ENCODE measurements at regions of chr19 and their contacts with region 1.

Region 1: DNA sequence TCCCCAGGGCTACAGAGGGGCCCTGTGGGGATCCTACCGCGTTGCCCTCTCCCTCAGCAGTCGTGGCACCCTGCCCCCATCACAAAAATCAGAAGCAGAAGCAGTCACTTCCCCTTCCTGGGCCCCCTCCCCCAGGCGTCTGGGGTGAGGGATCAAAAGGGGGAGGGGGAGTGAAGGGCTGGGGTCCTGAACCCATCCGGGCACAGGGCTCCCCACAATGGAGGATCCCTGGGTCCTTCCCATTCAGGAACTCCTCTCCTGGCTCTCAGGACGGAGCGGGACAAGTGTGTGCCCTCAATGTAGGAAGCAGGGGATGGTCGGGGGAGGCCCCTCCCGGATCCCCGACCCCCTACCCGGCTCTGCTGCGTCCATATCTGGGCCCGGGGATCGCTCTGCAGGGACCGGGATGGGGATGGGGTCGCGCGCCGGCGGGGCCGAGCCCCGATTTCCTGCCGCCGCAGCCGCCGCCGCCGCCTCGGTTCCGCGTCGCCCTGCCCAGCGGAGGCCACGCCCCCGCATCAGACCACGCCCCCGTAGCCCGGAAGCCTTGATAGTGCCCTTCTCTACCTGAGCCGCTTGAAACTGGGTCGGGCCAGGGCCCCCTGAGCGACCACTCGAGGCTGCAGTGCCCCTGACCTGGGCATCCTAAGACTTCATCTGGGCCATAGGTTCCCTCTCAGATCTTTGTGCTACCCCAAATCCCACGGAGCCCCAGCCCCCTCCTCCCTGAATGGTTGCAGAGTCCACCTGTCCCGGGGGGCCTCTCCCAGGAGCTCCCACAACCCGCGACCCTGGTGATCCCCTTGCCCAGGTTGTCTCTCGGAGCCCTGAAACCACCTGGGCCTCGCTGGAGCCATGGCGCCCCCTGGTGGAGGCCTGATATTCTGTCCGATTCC is at the start of gene GMIP:
- DNase-seq: peak; percentile 89
- ATAC-seq: peak; percentile 89
- H3K4me3 Mint-ChIP-seq: peak within 1 kb of the TSS; percentile 99
- H3K27ac Mint-ChIP-seq: peak within 1 kb of the TSS; percentile 96
- H3K4me1 Mint-ChIP-seq: peaks cover 19% of the 10 kb centered on the region
- H3K27me3 Mint-ChIP-seq: no peaks in the 10 kb centered on the region
- CTCF ChIP-seq: no peak
- total RNA-seq, gene GMIP: 129 and 130 TPM in 2 replicates

Region 2: DNA sequence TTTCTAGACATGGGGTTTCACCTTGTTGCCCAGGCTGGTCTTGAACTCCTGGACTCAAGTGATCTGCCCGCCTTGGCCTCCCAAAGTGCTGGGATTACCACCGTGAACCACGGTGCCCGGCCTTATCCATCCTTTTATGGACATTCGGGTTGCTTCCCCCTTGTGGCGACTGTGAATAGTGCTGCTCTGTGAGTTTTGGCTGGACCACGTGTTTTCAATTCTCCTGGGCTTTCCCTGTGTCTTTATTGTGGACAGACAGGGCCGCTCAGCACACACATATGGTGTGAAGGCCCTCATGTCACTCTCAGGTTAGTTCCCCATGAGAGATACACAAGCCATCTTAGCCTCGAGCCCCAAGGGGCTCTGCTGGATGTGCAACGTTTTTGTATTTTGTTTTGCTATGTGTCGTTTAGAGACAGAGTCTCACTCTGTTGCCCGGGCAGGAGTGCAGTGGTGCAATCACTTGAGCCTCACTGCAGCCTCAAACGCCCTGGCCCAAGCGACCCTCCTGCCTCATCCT is 282.3 kb before region 1 on chr19:
- CTCF ChIA-PET with region 1: no interaction called
- POLR2A ChIA-PET with region 1: interaction called, 3 read pairs
- intact Hi-C with region 1: loop called (anchors 5 kb)
- DNase-seq: peak; percentile 54
- ATAC-seq: peak; percentile 68
- H3K4me3 Mint-ChIP-seq: peak overlapping the region; percentile 74
- H3K27ac Mint-ChIP-seq: peak overlapping the region; percentile 57
- H3K4me1 Mint-ChIP-seq: peaks cover 23% of the 10 kb centered on the region
- H3K27me3 Mint-ChIP-seq: no peaks in the 10 kb centered on the region
- CTCF ChIP-seq: peak; percentile 87

Region 3: GRCh38 chr19:19420570-19421298 is 222.7 kb before region 1 on chr19:
- CTCF ChIA-PET with region 1: no interaction called
- POLR2A ChIA-PET with region 1: no interaction called
- intact Hi-C with region 1: no loop called
- DNase-seq: no peak
- ATAC-seq: peak; percentile 51
- H3K4me3 Mint-ChIP-seq: peak overlapping the region; percentile 41
- H3K27ac Mint-ChIP-seq: peak overlapping the region; percentile 46
- H3K4me1 Mint-ChIP-seq: peaks cover 79% of the 10 kb centered on the region
- H3K27me3 Mint-ChIP-seq: no peaks in the 10 kb centered on the region
- CTCF ChIP-seq: no peak

Region 4: GRCh38 chr19:19531951-19532805 is 111.2 kb before region 1 on chr19:
- CTCF ChIA-PET with region 1: interaction called, 46 read pairs
- POLR2A ChIA-PET with region 1: interaction called, 42 read pairs
- intact Hi-C with region 1: loop called (anchors 1 kb)
- DNase-seq: peak; percentile 86
- ATAC-seq: peak; percentile 85
- H3K4me3 Mint-ChIP-seq: no peak overlapping the region
- H3K27ac Mint-ChIP-seq: no peak overlapping the region
- H3K4me1 Mint-ChIP-seq: peaks cover 13% of the 10 kb centered on the region
- H3K27me3 Mint-ChIP-seq: no peaks in the 10 kb centered on the region
- CTCF ChIP-seq: peak; percentile 54

Region 5: DNA sequence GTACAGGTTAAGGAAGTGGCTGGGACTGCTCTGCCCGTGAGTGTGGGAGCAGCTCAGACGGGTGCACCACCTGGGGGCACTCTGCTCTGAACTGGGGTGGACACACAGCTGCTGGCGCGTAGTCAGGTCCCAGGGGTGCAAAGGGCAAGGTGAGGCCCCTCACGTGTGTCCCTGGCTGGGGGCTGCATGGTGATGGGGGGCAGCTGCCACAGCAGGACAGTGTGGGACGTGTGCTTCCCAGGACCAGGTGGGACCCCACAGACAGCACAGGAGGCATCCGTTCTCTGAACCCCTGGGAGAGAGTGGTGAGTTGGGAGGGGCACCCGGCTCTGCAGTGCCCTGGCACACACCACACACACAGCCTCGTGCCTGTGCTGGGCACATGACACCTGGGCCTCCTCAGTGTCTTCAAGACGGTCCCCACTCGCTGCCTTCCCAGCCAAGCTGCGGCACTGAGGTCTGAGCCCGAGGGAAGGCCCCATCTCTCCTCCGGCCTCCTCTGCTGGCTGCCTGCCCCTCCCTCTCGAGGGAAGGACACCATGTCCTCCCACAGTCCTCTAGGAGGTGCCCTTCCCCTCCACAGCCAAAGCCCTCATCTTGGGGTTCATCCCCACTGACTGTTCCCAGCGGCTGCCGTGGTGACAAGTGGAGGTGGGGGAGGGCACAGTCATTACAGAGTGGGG is 80.6 kb before region 1 on chr19:
- CTCF ChIA-PET with region 1: no interaction called
- POLR2A ChIA-PET with region 1: no interaction called
- intact Hi-C with region 1: no loop called
- DNase-seq: no peak
- ATAC-seq: no peak
- H3K4me3 Mint-ChIP-seq: no peak overlapping the region
- H3K27ac Mint-ChIP-seq: no peak overlapping the region
- H3K4me1 Mint-ChIP-seq: no peaks in the 10 kb centered on the region
- H3K27me3 Mint-ChIP-seq: no peaks in the 10 kb centered on the region
- CTCF ChIP-seq: no peak

Region 6: DNA sequence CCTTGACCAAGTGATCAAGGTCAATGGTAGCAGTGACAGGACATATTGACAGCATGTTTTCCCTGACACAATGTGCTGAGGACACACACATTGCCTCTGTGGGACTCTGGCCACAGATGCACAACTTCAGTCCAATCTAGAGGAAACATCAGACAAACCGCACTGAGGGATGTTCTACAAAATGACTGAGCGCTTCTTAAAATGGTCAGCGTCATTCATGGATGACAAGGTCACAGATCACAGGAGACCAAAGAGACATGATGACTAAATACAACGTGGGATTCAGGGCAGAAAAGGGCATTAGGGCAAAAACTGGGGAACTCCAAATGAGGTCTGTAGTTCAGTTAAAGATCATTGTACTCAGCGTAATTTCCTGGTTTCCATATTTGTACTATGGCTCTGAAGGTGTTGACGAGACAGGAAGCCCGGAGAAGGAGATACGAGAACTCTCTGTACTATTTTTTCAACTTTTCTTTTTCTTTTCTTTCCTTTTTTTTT is 45.5 kb before region 1 on chr19:
- CTCF ChIA-PET with region 1: no interaction called
- POLR2A ChIA-PET with region 1: interaction called, 4 read pairs
- intact Hi-C with region 1: loop called (anchors 1 kb)
- DNase-seq: no peak
- ATAC-seq: peak; percentile 80
- H3K4me3 Mint-ChIP-seq: peak overlapping the region; percentile 62
- H3K27ac Mint-ChIP-seq: peak overlapping the region; percentile 89
- H3K4me1 Mint-ChIP-seq: peaks cover 67% of the 10 kb centered on the region
- H3K27me3 Mint-ChIP-seq: no peaks in the 10 kb centered on the region
- CTCF ChIP-seq: no peak

Region 7: DNA sequence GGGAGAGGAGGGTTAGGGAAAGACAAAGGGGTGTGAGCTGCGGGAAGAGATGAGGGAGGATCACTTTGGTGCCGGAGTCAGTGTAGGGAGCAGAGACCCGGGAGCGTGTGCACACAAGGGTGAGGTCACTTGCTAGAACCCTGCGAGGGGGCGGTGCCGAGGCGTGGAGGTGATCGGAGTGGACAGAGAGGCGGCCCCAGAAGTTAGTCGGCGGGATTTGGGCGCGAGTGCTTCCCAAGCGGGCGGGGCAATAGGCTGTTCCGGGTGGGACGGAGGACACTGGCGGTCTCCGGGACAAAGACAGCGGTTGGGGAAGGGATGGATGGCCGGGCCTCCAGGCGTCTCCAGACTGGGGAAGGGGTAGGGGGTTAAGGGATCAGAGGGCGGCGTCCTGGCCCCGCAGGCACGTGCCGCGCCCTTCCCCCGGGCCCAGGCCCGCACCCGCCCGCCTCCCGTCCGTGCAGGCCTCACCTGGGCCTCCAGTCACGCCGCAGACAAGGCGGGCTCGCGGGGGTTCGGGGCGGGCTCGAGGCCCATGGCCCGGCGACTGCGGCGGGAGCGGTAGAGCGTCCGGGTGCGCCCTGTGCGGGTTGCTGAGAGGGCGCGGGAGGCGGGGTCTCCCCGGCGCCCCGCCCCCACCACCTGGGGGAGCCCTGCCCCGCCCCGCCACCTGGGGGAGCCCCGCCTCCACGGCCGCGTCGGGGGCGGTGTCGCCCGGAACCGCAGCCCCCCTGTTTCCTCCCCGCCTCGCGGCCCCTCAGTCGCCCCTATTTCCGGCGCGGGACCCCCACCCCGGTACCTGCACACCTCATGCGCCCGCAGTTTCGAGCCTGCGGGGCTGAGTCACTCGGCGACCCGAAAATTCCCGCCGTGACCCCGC is 15.5 kb before region 1 on chr19 and contains the start of gene LPAR2:
- CTCF ChIA-PET with region 1: interaction called, 5 read pairs
- POLR2A ChIA-PET with region 1: interaction called, 7 read pairs
- intact Hi-C with region 1: loop called (anchors 1 kb)
- DNase-seq: peak; percentile 81
- ATAC-seq: peak; percentile 87
- H3K4me3 Mint-ChIP-seq: peak within 1 kb of the TSS; percentile 93
- H3K27ac Mint-ChIP-seq: peak within 1 kb of the TSS; percentile 92
- H3K4me1 Mint-ChIP-seq: peaks cover 24% of the 10 kb centered on the region
- H3K27me3 Mint-ChIP-seq: no peaks in the 10 kb centered on the region
- CTCF ChIP-seq: no peak
- total RNA-seq, gene LPAR2: 29.0 and 33.7 TPM in 2 replicates

Region 8: GRCh38 chr19:19776041-19777008 is 132.9 kb after region 1 on chr19:
- CTCF ChIA-PET with region 1: no interaction called
- POLR2A ChIA-PET with region 1: no interaction called
- intact Hi-C with region 1: loop called (anchors 1 kb)
- DNase-seq: peak; percentile 84
- ATAC-seq: peak; percentile 99
- H3K4me3 Mint-ChIP-seq: peak overlapping the region; percentile 97
- H3K27ac Mint-ChIP-seq: peak overlapping the region; percentile 88
- H3K4me1 Mint-ChIP-seq: peaks cover 45% of the 10 kb centered on the region
- H3K27me3 Mint-ChIP-seq: no peaks in the 10 kb centered on the region
- CTCF ChIP-seq: no peak

Region 9: GRCh38 chr19:19956434-19957075 is 313.1 kb after region 1 on chr19:
- CTCF ChIA-PET with region 1: interaction called, 3 read pairs
- POLR2A ChIA-PET with region 1: no interaction called
- intact Hi-C with region 1: loop called (anchors 1 kb)
- DNase-seq: no peak
- ATAC-seq: no peak
- H3K4me3 Mint-ChIP-seq: no peak overlapping the region
- H3K27ac Mint-ChIP-seq: no peak overlapping the region
- H3K4me1 Mint-ChIP-seq: peaks cover 7% of the 10 kb centered on the region
- H3K27me3 Mint-ChIP-seq: no peaks in the 10 kb centered on the region
- CTCF ChIP-seq: no peak